Endothelial cell of umbilical vein (primary cell): ENCODE measurements at regions of chr9 and their contacts with region 1.

Region 1: DNA sequence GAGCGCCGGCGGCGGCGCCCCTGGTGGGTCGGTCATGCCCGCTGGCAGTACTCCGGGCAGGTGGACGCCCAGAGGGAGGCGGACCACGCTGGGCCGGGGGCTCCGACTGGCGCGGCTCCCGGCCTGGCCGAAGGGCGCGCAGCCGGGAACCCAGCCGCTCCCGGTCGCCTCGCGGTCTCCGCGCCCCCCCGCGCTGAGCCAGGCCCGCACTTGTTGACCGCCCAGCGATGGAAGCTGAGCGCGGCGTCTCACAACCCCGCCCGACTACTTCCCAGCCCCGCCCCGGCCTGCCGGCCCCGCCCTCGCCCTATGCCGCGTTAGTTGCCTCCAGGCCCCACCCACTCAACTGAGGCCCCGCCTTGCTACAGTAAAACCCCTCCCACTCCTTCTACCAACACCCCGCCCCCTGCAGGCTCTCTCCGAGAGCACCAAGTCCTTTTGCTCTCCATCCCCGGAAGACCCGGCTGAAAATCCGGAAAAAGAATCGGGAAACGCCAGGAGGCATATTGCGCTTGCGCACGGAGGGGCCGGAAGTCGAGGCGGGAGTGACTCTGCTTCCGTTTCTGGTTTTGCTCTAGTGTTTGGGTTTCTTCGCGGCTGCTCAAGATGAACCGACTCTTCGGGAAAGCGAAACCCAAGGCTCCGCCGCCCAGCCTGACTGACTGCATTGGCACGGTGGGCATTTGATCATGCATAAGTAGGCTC is at the starts of genes BAG1 and CHMP5:
- DNase-seq: peak; percentile 100
- H3K4me3 ChIP-seq: peak within 1 kb of the TSS; percentile 37 to 96 (median 75)
- H3K27ac ChIP-seq: peak within 1 kb of the TSS; percentile 34
- H3K4me1 ChIP-seq: peaks cover 15% of the 10 kb centered on the region
- H3K27me3 ChIP-seq: no peaks in the 10 kb centered on the region
- CTCF ChIP-seq: peak; percentile 9 to 37
- POLR2A ChIP-seq: peak; percentile 85
- total RNA-seq, gene BAG1: 87.4 and 98.7 TPM in 2 replicates
- total RNA-seq, gene CHMP5: 54.5 and 55.8 TPM in 2 replicates

Region 2: GRCh38 chr9:33329117-33329563 is 64.5 kb after region 1 on chr9:
- CTCF ChIA-PET with region 1: no interaction called
- POLR2A ChIA-PET with region 1: no interaction called
- dilution Hi-C with region 1: no loop called
- intact Hi-C with region 1: loop called (anchors 2 kb)
- DNase-seq: peak; percentile 94
- H3K4me3 ChIP-seq: no peak overlapping the region
- H3K27ac ChIP-seq: peak overlapping the region; percentile 69
- H3K4me1 ChIP-seq: peaks cover 48% of the 10 kb centered on the region
- H3K27me3 ChIP-seq: no peaks in the 10 kb centered on the region
- CTCF ChIP-seq: no peak
- POLR2A ChIP-seq: no peak

Region 3: GRCh38 chr9:33816327-33817252 is 552.0 kb after region 1 on chr9 and contains the start of gene UBE2R2:
- CTCF ChIA-PET with region 1: no interaction called
- POLR2A ChIA-PET with region 1: no interaction called
- dilution Hi-C with region 1: no loop called
- intact Hi-C with region 1: no loop called
- DNase-seq: peak; percentile 93
- H3K4me3 ChIP-seq: peak within 1 kb of the TSS; percentile 67 to 97 (median 83)
- H3K27ac ChIP-seq: peak within 1 kb of the TSS; percentile 95
- H3K4me1 ChIP-seq: peaks cover 42% of the 10 kb centered on the region
- H3K27me3 ChIP-seq: no peaks in the 10 kb centered on the region
- CTCF ChIP-seq: no peak
- POLR2A ChIP-seq: peak; percentile 70
- total RNA-seq, gene UBE2R2: 51.5 and 54.3 TPM in 2 replicates